ENCODE measurements at regions of chr18 and their contacts with region 1.

Region 1: GRCh38 chr18:50266248-50266704 is at the start of gene CFAP53:
- DNase-seq: peak; percentile 89 to 95 (median 92)
- H3K4me3 ChIP-seq: peak within 1 kb of the TSS; percentile 58
- H3K27ac ChIP-seq: no peak within 1 kb of the TSS
- H3K4me1 ChIP-seq: peaks cover 4% of the 10 kb centered on the region
- H3K27me3 ChIP-seq: no peaks in the 10 kb centered on the region
- CTCF ChIP-seq: no peak
- EP300 ChIP-seq: no peak
- POLR2A ChIP-seq: no peak
- total RNA-seq, gene CFAP53: 0.40 to 9.9 (median 0.61) TPM

Region 2: GRCh38 chr18:51197661-51198424 is 931.6 kb after region 1 on chr18 and contains the start of gene MEX3C:
- intact Hi-C with region 1: loop called in 1 of 4 experiments (anchors 5 kb)
- DNase-seq: peak; percentile 99
- H3K4me3 ChIP-seq: peak within 1 kb of the TSS; percentile 94
- H3K27ac ChIP-seq: peak within 1 kb of the TSS; percentile 94 to 98
- H3K4me1 ChIP-seq: peaks cover 9% of the 10 kb centered on the region
- H3K27me3 ChIP-seq: no peaks in the 10 kb centered on the region
- CTCF ChIP-seq: peak; percentile 26 to 36 (median 32)
- EP300 ChIP-seq: peak; percentile 44
- POLR2A ChIP-seq: peak; percentile 56
- total RNA-seq, gene MEX3C: 21.6 to 47.4 (median 33.0) TPM